ENCODE measurements at regions of chr4 and their contacts with region 1.

Region 1: GRCh38 chr4:150209140-150209829 is 131.0 kb downstream of the DCLK2 start:
- DNase-seq: peak in 1 of 2 experiments; percentile 66
- H3K4me3 ChIP-seq: no peak overlapping the region
- H3K27ac ChIP-seq: no peak overlapping the region
- H3K4me1 ChIP-seq: no peaks in the 10 kb centered on the region
- H3K27me3 ChIP-seq: no peaks in the 10 kb centered on the region
- CTCF ChIP-seq: peak; percentile 33 to 49 (median 43); a peak in 3 of 4 replicates
- EP300 ChIP-seq: no peak
- POLR2A ChIP-seq: no peak
- RAD21 ChIP-seq: peak; percentile 66 to 71

Region 2: DNA sequence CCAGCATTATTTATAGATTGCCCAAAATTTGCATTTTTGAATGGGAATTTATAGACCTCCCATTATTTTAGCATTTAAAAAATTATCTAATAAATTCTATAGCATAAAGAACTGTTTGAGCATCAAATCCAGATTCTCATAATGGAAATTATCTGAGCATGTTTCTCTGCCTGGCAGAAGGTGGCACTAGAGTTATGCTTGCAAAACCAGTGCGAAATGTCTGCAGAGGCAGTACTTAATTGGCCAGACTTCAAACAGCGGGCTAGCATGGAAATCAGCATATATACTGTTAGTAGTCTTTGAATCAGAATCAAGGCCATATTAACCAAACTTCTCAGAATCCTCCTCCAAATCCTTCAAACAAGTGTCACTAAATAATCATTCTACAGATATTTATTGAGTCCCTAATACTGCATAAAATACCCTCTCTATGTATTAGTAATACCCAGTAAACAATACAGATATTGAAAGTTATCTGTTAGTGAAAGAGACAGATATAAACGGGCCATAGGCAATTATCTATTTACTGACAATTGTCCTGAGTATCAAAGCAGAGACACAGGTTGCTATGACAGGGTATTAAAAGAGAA is 209.7 kb before region 1 on chr4:
- CTCF ChIA-PET with region 1: interaction called, 18 read pairs
- POLR2A ChIA-PET with region 1: no interaction called
- DNase-seq: no peak
- H3K4me3 ChIP-seq: no peak overlapping the region
- H3K27ac ChIP-seq: no peak overlapping the region
- H3K4me1 ChIP-seq: no peaks in the 10 kb centered on the region
- H3K27me3 ChIP-seq: no peaks in the 10 kb centered on the region
- CTCF ChIP-seq: peak in 2 of 3 experiments; percentile 71 to 74; a peak in 3 of 4 replicates
- EP300 ChIP-seq: no peak
- POLR2A ChIP-seq: no peak
- RAD21 ChIP-seq: peak; percentile 91

Region 3: GRCh38 chr4:150010525-150011126 is 198.7 kb before region 1 on chr4:
- CTCF ChIA-PET with region 1: interaction called, 22 read pairs
- POLR2A ChIA-PET with region 1: no interaction called
- DNase-seq: no peak
- H3K4me3 ChIP-seq: no peak overlapping the region
- H3K27ac ChIP-seq: no peak overlapping the region
- H3K4me1 ChIP-seq: peaks cover 0 to 2% (median 0%) of the 10 kb centered on the region in 4 experiments; a peak in 1 of 7 replicates
- H3K27me3 ChIP-seq: no peaks in the 10 kb centered on the region; a peak in 1 of 7 replicates
- CTCF ChIP-seq: peak in 2 of 3 experiments; percentile 51 to 56; a peak in 3 of 4 replicates
- EP300 ChIP-seq: no peak
- POLR2A ChIP-seq: no peak
- RAD21 ChIP-seq: peak; percentile 67 to 71

Region 4: DNA sequence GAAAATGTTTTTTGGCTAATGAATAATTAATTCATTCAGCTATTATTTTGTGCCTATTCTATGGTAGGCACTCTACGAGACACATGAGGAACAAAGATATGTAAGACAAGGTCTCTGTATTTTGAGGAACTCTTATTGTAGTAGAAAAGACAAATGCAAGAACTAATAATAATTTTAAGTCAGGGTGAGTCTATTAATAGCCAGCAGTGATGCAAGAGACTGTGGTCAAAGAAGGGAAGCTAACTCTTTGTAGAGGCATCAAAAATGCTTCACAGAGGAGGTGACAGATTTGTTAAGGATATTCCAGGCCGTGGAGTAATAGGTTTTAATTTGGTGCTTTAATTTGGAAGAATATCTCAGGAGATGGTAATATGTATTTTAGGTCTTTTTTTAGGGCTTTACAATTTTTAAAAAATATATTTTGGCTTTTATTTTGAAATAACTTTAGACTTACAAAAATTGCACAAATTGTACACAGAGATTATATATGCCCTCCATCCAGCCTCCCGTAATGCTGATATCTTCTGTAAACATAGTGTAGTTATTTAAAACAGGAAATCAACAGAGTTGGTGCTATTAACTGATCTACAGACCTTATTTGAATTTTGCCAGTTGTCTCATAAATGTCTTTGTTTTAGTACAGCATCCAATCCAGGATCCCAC is 83.0 kb before region 1 on chr4:
- CTCF ChIA-PET with region 1: no interaction called
- POLR2A ChIA-PET with region 1: no interaction called
- DNase-seq: no peak
- H3K4me3 ChIP-seq: no peak overlapping the region
- H3K27ac ChIP-seq: no peak overlapping the region
- H3K4me1 ChIP-seq: no peaks in the 10 kb centered on the region
- H3K27me3 ChIP-seq: no peaks in the 10 kb centered on the region
- CTCF ChIP-seq: no peak
- EP300 ChIP-seq: no peak
- POLR2A ChIP-seq: no peak
- RAD21 ChIP-seq: no peak

Region 5: DNA sequence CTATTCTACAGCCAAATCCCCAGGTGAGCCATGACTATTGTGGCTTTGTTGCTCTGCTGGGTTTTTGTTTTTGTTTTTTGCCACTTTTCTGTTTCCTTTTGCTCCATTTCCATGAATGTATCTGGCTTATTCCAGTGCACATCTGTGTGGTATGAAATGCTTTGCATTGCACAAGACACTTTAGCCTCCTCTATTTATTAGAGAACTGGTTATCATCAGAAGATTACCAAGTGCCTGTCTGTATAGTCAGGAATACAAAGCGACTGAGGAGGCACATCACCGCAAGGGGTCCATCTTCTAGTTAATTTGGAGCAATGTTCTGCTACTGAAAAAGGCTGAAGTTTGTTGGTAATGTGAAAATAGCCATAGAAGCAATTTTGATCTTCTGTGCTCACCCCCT is 10.2 kb before region 1 on chr4:
- CTCF ChIA-PET with region 1: interaction called, 25 read pairs
- POLR2A ChIA-PET with region 1: interaction called, 3 read pairs
- DNase-seq: no peak
- H3K4me3 ChIP-seq: no peak overlapping the region
- H3K27ac ChIP-seq: no peak overlapping the region
- H3K4me1 ChIP-seq: no peaks in the 10 kb centered on the region
- H3K27me3 ChIP-seq: no peaks in the 10 kb centered on the region
- CTCF ChIP-seq: no peak
- EP300 ChIP-seq: no peak
- POLR2A ChIP-seq: no peak
- RAD21 ChIP-seq: no peak

Region 6: DNA sequence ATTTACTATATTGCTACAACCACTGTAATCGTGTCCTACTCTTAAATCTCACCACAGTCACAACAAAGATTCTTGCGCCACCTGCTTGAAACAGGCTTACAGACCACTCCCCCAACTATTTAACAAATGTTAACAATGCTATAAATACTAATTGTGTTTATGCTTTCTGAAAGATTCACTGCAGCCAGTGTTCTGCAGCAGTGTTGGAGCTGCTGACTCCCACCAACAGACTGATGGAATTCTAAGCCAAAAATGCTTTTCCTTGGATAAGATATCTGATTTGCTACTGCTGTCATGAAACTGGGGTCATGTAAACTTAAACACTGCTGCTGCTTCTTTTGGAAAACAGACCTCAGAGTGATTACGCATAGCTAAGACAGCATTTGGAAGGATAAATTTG is 128.4 kb after region 1 on chr4:
- CTCF ChIA-PET with region 1: no interaction called
- POLR2A ChIA-PET with region 1: no interaction called
- DNase-seq: no peak
- H3K4me3 ChIP-seq: no peak overlapping the region
- H3K27ac ChIP-seq: no peak overlapping the region
- H3K4me1 ChIP-seq: peaks cover 0 to 6% (median 3%) of the 10 kb centered on the region in 4 experiments; a peak in 3 of 7 replicates
- H3K27me3 ChIP-seq: no peaks in the 10 kb centered on the region
- CTCF ChIP-seq: no peak
- EP300 ChIP-seq: no peak
- POLR2A ChIP-seq: no peak
- RAD21 ChIP-seq: no peak

Measured in H1 (cell line).